Dorsolateral prefrontal cortex (tissue), 120 donors: ENCODE measurements at regions of chr16 and their contacts with region 1.

Region 1: DNA sequence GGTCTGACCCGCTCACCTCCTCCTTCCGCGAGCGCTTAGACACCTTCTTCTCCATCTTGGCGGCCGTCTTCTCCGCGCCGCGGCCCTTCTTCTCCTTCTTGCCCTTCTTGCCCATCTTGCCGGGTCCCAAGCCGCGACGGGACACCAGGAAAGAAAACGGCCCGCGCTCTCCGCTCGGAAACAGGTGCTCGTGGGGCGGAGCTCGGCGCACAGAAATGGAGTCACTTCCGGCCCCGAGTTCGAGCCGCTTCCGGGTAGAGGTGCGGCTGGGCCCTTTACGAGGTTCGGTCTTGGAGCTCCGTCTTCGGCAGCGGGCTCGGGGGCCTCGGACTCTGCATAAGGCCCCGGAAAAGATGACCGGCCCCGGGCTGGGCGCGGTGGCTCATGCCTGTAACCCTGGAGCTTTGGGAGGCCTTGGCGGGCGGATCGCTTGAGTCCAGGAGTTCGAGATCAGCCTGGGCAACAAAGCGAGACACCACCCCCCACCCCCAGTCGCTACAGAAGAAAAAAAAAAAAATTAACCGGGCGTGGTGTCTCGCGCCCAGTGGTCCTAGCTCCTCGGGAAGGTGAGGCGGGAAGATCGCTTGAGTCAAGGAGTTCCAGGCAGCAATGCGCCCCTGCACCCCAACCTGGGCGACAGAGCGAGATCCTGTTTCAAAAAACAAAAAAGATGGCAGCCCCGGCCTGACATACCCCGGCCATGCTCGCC is at the start of gene KLHDC4:
- DNase-seq: peak; percentile 86 to 94 (median 90)
- H3K4me3 ChIP-seq: peak within 1 kb of the TSS; percentile 70 to 100 (median 96)
- H3K27ac ChIP-seq: peak within 1 kb of the TSS in 56 of 59 donors; percentile 47 to 93 (median 79)
- H3K27me3 ChIP-seq: no peaks in the 10 kb centered on the region
- CTCF ChIP-seq: peak in 26 of 56 donors; percentile 9 to 52 (median 24)
- total RNA-seq, gene KLHDC4: 22.5 to 62.8 (median 39.0) TPM

Region 2: GRCh38 chr16:87416826-87417527 is 349.0 kb before region 1 on chr16:
- intact Hi-C with region 1: loop called in 1 of 2 experiments (anchors 10 kb)
- DNase-seq: peak in 5 of 10 donors; percentile 27 to 66 (median 61)
- H3K4me3 ChIP-seq: no peak overlapping the region
- H3K27ac ChIP-seq: peak overlapping the region in 10 of 59 donors; percentile 2 to 82 (median 47)
- H3K27me3 ChIP-seq: no peaks in the 10 kb centered on the region
- CTCF ChIP-seq: peak; percentile 47 to 85 (median 73)

Region 3: DNA sequence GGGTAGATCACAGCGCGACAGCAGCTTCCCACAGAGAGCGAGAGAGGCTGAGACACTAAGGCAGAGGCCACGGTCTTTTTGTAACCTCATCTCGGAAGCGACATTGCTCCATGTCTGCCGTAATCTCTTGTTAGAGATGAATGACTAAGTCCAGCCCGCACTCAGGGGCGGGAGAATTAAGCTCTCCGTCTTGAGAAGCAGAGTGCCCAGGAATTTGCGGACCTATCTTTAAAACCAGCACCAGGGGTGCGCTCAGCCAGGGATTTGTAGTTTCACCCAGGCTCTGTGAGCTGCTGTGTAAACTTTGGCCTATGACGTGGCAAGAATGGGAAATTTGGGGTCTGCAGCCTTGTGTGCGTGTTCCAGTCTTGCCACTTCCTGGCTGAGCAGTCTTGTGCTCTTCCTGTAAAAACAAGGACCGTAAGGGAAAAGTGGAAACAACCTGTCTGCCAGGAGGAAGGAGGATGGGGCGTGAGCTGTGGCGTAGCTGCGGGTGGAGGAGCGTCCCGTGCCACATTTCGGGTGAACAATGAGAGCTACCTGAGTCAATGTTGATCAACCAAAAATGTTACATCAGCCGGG is 179.6 kb before region 1 on chr16:
- intact Hi-C with region 1: loop called (anchors 2 to 5 kb)
- DNase-seq: no peak
- H3K4me3 ChIP-seq: no peak overlapping the region
- H3K27ac ChIP-seq: no peak overlapping the region
- H3K27me3 ChIP-seq: peaks cover 0 to 44% (median 0%) of the 10 kb centered on the region in 45 donors
- CTCF ChIP-seq: no peak

Region 4: DNA sequence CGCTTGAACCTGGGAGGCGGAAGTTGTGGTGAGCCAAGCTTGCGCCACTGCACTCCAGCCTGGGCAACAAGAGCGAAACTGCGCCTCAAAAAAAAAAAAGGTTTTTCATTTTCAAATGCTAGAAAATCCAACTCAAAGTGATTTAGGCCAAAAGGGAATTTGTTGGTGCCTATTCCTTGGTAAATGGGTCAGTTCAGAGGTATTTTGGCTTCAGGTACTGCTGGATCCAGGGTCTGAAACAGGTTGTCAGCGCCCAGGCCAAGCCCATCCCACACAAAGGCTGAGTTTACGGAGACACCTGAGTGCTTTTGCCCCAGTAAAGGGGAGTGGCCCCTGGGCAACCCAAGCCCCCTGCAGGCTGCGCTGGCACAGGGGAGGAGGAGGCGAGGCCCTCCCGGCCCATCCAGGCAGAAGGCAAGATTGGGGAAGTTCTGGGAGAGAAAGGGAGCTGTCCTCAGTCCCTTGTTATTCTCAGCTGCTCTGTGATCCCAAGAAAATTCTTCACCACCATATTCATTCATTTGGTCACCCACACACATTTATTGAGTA is 172.1 kb before region 1 on chr16:
- intact Hi-C with region 1: loop called (anchors 2 to 5 kb)
- DNase-seq: no peak
- H3K4me3 ChIP-seq: no peak overlapping the region
- H3K27ac ChIP-seq: no peak overlapping the region
- H3K27me3 ChIP-seq: peaks cover 0 to 10% (median 0%) of the 10 kb centered on the region in 45 donors
- CTCF ChIP-seq: no peak

Region 5: GRCh38 chr16:87636072-87636684 is 129.8 kb before region 1 on chr16:
- intact Hi-C with region 1: loop called in 1 of 2 experiments (anchors 2 kb)
- DNase-seq: peak; percentile 61 to 90 (median 76)
- H3K4me3 ChIP-seq: peak overlapping the region; percentile 8 to 61 (median 42)
- H3K27ac ChIP-seq: peak overlapping the region in 11 of 59 donors; percentile 1 to 70 (median 36)
- H3K27me3 ChIP-seq: peaks cover 0 to 7% (median 0%) of the 10 kb centered on the region in 45 donors
- CTCF ChIP-seq: peak in 54 of 56 donors; percentile 32 to 80 (median 66)

Region 6: GRCh38 chr16:87723226-87723623 is 42.7 kb before region 1 on chr16:
- intact Hi-C with region 1: no loop called
- DNase-seq: peak; percentile 65 to 95 (median 90)
- H3K4me3 ChIP-seq: peak overlapping the region in 19 of 59 donors; percentile 1 to 48 (median 20)
- H3K27ac ChIP-seq: peak overlapping the region in 45 of 59 donors; percentile 1 to 84 (median 41)
- H3K27me3 ChIP-seq: no peaks in the 10 kb centered on the region
- CTCF ChIP-seq: peak in 2 of 56 donors; percentile 11 to 13

Region 7: GRCh38 chr16:87747626-87748414 is 18.1 kb before region 1 on chr16:
- intact Hi-C with region 1: no loop called
- DNase-seq: no peak
- H3K4me3 ChIP-seq: no peak overlapping the region
- H3K27ac ChIP-seq: no peak overlapping the region
- H3K27me3 ChIP-seq: no peaks in the 10 kb centered on the region
- CTCF ChIP-seq: no peak